ENCODE measurements at regions of chr5 and their contacts with region 1.

Region 1: GRCh38 chr5:23139338-23140171 is 286.4 kb upstream of the CDH12 start:
- DNase-seq: no peak
- H3K4me3 ChIP-seq: no peak overlapping the region
- H3K27ac ChIP-seq: no peak overlapping the region
- H3K4me1 ChIP-seq: no peaks in the 10 kb centered on the region
- H3K27me3 ChIP-seq: no peaks in the 10 kb centered on the region
- CTCF ChIP-seq: peak; percentile 66

Region 2: GRCh38 chr5:21810737-21811316 is 1328.7 kb before region 1 on chr5:
- CTCF ChIA-PET with region 1: interaction called, 3 read pairs
- POLR2A ChIA-PET with region 1: no interaction called
- intact Hi-C with region 1: loop called (anchors 5 kb)
- DNase-seq: no peak
- H3K4me3 ChIP-seq: no peak overlapping the region
- H3K27ac ChIP-seq: no peak overlapping the region
- H3K4me1 ChIP-seq: peaks cover 6% of the 10 kb centered on the region
- H3K27me3 ChIP-seq: no peaks in the 10 kb centered on the region
- CTCF ChIP-seq: peak; percentile 74

Region 3: GRCh38 chr5:21919410-21920022 is 1220.0 kb before region 1 on chr5:
- CTCF ChIA-PET with region 1: no interaction called
- POLR2A ChIA-PET with region 1: no interaction called
- intact Hi-C with region 1: loop called (anchors 1 kb)
- DNase-seq: peak in 1 of 2 experiments; percentile 25
- H3K4me3 ChIP-seq: no peak overlapping the region
- H3K27ac ChIP-seq: no peak overlapping the region
- H3K4me1 ChIP-seq: no peaks in the 10 kb centered on the region
- H3K27me3 ChIP-seq: no peaks in the 10 kb centered on the region
- CTCF ChIP-seq: peak; percentile 78